Adrenal gland (tissue), 19 donors: ENCODE measurements at regions of chrX and their contacts with region 1.

Region 1: GRCh38 chrX:18931972-18932371 is 51.9 kb downstream of the PHKA2 start:
- DNase-seq: peak in 2 of 7 donors; percentile 2 to 24
- H3K4me3 ChIP-seq: no peak overlapping the region
- H3K27ac ChIP-seq: no peak overlapping the region
- H3K4me1 ChIP-seq: no peaks in the 10 kb centered on the region
- H3K27me3 ChIP-seq: no peaks in the 10 kb centered on the region
- CTCF ChIP-seq: peak in 5 of 6 experiments; percentile 12 to 37 (median 36)
- POLR2A ChIP-seq: no peak

Region 2: GRCh38 chrX:18607966-18608365 is 324.0 kb before region 1 on chrX:
- intact Hi-C with region 1: no loop called
- DNase-seq: no peak
- H3K4me3 ChIP-seq: no peak overlapping the region
- H3K27ac ChIP-seq: no peak overlapping the region
- H3K4me1 ChIP-seq: no peaks in the 10 kb centered on the region
- H3K27me3 ChIP-seq: no peaks in the 10 kb centered on the region
- CTCF ChIP-seq: no peak
- POLR2A ChIP-seq: no peak

Region 3: DNA sequence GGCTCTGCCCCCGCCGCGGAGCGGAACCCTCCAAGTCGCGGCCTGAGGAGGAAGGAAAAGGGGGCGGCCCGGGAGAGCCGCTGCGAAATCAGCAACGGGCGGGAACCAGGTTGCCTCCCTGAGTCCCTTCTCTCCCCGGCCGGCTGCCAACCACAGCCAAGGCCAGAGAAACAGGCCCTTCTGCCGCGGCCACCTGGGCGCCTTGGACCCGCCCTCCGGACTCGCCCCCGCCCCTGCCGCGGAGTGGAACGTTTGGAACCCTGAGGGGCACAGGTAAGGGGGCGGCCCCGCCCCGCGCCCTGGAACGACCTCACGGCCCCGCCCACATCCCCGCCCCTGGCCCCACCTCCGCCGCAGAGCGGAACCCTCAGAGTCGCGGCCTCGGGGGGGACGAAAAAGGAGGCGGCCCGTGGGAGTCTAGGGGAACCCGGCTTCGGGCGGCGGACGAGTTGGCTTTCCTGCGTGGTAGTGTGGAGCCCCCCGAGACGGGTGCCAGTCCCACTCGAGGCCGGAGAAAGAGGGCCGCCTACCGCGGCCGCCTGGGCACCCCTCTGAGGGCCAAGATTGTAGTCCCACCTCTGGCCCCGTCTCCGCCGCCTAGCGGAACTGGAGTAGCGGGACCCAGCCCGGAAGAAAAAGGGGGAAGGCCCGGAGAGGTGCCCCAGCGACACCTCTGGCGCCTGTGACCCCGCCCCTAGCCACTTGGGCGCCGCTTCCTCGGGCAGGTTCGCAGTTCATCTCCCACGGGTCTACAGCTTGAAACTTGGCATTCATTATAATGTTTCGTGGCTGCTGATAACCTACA is 52.6 kb after region 1 on chrX:
- intact Hi-C with region 1: loop called in 1 of 2 experiments (anchors 10 kb)
- DNase-seq: peak; percentile 80 to 84 (median 82)
- H3K4me3 ChIP-seq: peak overlapping the region in 3 of 4 donors; percentile 33 to 69 (median 61)
- H3K27ac ChIP-seq: peak overlapping the region; percentile 41 to 90 (median 85)
- H3K4me1 ChIP-seq: peaks cover 4 to 8% of the 10 kb centered on the region in 2 donors
- H3K27me3 ChIP-seq: no peaks in the 10 kb centered on the region
- CTCF ChIP-seq: peak; percentile 23 to 79 (median 58)
- POLR2A ChIP-seq: peak; percentile 24 to 37

Region 4: DNA sequence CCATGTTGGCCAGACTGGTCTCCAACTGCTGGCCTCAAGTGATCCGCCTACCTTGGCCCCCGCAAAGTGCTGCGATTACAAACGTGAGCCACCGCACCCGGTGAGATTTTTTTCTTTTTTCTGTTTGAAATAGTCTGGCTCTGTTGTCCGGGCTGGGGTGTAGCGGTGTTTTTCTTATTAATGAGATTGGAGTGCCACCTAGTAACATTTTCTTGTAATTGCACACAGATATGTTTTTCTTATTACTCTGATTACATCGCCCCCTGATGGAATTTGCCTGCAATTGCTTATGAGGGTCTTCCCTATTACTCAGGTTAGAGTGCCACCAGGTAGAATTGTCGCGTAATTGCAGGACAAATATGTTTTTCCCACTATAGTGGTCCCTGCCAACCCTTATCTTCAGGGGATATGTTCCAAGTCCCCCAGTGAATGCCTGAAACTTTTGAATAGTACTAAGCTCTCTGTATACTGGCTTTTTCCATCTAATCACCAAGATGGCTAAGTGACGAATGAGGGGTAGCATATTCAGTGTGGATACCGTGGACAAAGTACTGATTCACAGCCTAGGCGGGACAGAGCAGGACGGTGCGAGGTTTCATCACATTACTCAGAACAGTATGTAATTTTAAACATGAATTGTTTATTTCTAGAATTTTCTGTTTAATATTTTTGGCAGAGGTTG is 403.1 kb after region 1 on chrX:
- intact Hi-C with region 1: loop called in 1 of 2 experiments (anchors 5 kb)
- DNase-seq: no peak
- H3K4me3 ChIP-seq: no peak overlapping the region
- H3K27ac ChIP-seq: no peak overlapping the region
- H3K4me1 ChIP-seq: no peaks in the 10 kb centered on the region
- H3K27me3 ChIP-seq: no peaks in the 10 kb centered on the region
- CTCF ChIP-seq: peak in 3 of 6 experiments; percentile 7 to 22 (median 10)
- POLR2A ChIP-seq: no peak